Right cardiac atrium (tissue), 5 donors: ENCODE measurements at regions of chr7 and their contacts with region 1.

Region 1: GRCh38 chr7:2109936-2110585 is 122.7 kb downstream of the MAD1L1 start:
- DNase-seq: peak in 2 of 3 donors; percentile 20 to 33
- ATAC-seq: peak in 1 of 2 donors; percentile 13
- H3K4me3 ChIP-seq: no peak overlapping the region
- H3K27ac ChIP-seq: no peak overlapping the region
- H3K4me1 ChIP-seq: peaks cover under 1% of the 10 kb centered on the region
- H3K27me3 ChIP-seq: no peaks in the 10 kb centered on the region

Region 2: GRCh38 chr7:1979591-1980560 is 130.2 kb before region 1 on chr7:
- intact Hi-C with region 1: no loop called
- DNase-seq: peak; percentile 10 to 49 (median 32)
- ATAC-seq: peak; percentile 29 to 40
- H3K4me3 ChIP-seq: no peak overlapping the region
- H3K27ac ChIP-seq: no peak overlapping the region
- H3K4me1 ChIP-seq: no peaks in the 10 kb centered on the region
- H3K27me3 ChIP-seq: no peaks in the 10 kb centered on the region

Region 3: DNA sequence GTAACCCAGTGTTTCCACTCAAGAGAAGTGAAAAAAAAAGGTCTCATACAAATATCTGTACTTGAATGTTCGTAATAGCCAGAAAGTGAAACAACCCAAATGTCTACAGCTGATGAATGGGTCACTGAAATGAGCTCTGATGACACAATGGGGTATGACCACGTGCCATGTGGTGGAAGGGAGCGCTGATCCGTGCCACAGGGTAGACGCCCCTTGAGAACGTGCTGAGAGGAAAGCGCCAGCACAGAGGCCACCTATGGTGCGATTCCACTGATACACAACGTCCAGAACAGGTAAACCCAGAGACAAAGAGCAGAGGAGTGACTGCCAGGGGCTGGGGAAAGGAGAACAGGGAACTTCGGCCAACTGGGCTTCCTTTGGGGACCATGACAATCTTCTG is 72.4 kb after region 1 on chr7:
- intact Hi-C with region 1: no loop called
- DNase-seq: no peak
- ATAC-seq: no peak
- H3K4me3 ChIP-seq: no peak overlapping the region
- H3K27ac ChIP-seq: no peak overlapping the region
- H3K4me1 ChIP-seq: no peaks in the 10 kb centered on the region
- H3K27me3 ChIP-seq: no peaks in the 10 kb centered on the region

Region 4: GRCh38 chr7:2195400-2196246 is 85.6 kb after region 1 on chr7:
- intact Hi-C with region 1: loop called in 2 of 4 experiments (anchors 10 kb)
- DNase-seq: peak in 1 of 3 donors; percentile 66
- ATAC-seq: peak; percentile 38 to 39
- H3K4me3 ChIP-seq: no peak overlapping the region
- H3K27ac ChIP-seq: peak overlapping the region; percentile 45
- H3K4me1 ChIP-seq: peaks cover 7% of the 10 kb centered on the region
- H3K27me3 ChIP-seq: no peaks in the 10 kb centered on the region